AG04450 (cell line): ENCODE measurements at regions of chr2 and their contacts with region 1.

Region 1: DNA sequence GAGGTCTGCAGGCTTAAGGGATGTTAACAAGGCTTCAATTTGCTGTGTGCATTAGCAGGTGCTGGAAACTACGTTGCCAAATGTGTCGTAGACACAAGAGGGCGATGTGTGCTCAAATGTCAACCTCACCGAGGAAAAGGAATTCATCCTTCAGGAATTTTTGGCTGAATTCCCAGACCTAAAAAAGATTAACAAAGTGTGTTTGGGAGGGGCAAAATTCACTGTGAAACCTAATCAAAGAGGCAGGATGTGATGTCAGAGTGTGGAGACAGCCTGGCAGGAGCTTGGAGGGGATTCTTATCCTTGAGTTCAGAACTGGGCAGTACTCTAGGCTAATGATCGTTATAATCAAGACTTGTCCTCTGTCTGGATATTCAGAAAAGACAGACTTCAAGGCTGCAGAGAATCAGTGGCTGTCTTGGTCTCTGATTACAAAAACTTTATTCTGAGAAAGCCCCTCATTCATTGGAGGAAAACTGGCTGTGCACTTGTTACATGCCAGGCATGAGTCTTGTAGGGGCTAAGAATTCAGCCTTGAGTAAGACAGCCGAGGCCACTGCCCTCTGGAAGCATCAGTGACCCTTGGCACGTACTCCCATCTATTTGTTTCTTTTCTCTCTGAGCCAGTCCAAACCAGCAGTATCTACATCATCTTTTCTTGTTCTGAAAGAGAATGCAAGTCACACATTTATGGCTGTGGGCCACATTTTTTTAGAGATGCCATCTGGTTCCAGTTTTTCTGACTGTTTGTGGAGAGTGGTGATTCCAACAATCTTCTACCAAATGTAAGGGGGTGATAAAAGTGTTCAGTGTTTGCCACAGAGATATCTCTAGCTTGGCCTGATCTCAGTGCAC is 18.7 kb upstream of the SCYGR1 start:
- DNase-seq: peak; percentile 95
- H3K4me3 ChIP-seq: no peak overlapping the region
- H3K27ac ChIP-seq: peak overlapping the region; percentile 96
- H3K27me3 ChIP-seq: no peaks in the 10 kb centered on the region
- CTCF ChIP-seq: peak; percentile 77

Region 2: GRCh38 chr2:227163998-227164762 is 242.2 kb before region 1 on chr2 and contains the starts of genes COL4A3 and COL4A4:
- CTCF ChIA-PET with region 1: no interaction called
- POLR2A ChIA-PET with region 1: no interaction called
- DNase-seq: no peak
- H3K4me3 ChIP-seq: peak within 1 kb of the TSS; percentile 25
- H3K27ac ChIP-seq: no peak within 1 kb of the TSS
- H3K27me3 ChIP-seq: peaks cover 28% of the 10 kb centered on the region
- CTCF ChIP-seq: no peak
- polyA plus RNA-seq, gene COL4A3: 0.07 TPM in 1 of 2 replicates, not detected in the other
- polyA plus RNA-seq, gene COL4A4: 0.05 and 0.06 TPM in 2 replicates

Region 3: GRCh38 chr2:227376911-227377396 is 29.4 kb before region 1 on chr2:
- CTCF ChIA-PET with region 1: interaction called, 16 read pairs
- POLR2A ChIA-PET with region 1: interaction called, 3 read pairs
- DNase-seq: peak; percentile 23
- H3K4me3 ChIP-seq: no peak overlapping the region
- H3K27ac ChIP-seq: no peak overlapping the region
- H3K27me3 ChIP-seq: no peaks in the 10 kb centered on the region
- CTCF ChIP-seq: no peak

Region 4: DNA sequence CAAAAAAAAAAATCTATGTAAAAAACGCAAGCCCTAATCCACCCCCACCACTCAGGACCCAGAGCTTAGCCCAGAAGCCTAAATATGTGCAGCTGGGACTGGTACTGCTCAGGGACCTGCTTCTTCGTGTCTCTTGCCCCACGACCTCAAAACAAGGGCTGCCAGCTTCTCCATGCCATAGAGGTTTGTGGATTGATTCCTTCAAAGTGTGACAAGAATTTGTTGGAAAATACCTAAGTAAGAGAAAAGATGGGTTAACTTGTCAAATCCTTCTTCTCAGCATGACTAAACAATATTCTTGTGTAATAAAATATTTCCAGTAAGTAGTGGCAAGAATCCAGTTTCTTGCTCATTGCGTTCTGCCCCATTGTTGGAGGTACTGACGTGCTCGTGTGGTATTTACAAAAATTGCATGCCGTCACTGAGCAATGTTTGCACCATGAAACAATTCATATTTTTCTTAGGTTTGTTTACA is 17.8 kb before region 1 on chr2:
- CTCF ChIA-PET with region 1: interaction called, 26 read pairs
- POLR2A ChIA-PET with region 1: interaction called, 4 read pairs
- DNase-seq: peak; percentile 98
- H3K4me3 ChIP-seq: no peak overlapping the region
- H3K27ac ChIP-seq: peak overlapping the region; percentile 96
- H3K27me3 ChIP-seq: no peaks in the 10 kb centered on the region
- CTCF ChIP-seq: no peak

Region 5: GRCh38 chr2:227395556-227395955 is 10.8 kb before region 1 on chr2:
- CTCF ChIA-PET with region 1: interaction called, 26 read pairs
- POLR2A ChIA-PET with region 1: interaction called, 4 read pairs
- DNase-seq: no peak
- H3K4me3 ChIP-seq: no peak overlapping the region
- H3K27ac ChIP-seq: no peak overlapping the region
- H3K27me3 ChIP-seq: no peaks in the 10 kb centered on the region
- CTCF ChIP-seq: no peak

Region 6: GRCh38 chr2:227471924-227472264 is 65.5 kb after region 1 on chr2 and contains the start of gene AGFG1:
- CTCF ChIA-PET with region 1: interaction called, 19 read pairs
- POLR2A ChIA-PET with region 1: no interaction called
- DNase-seq: peak; percentile 42
- H3K4me3 ChIP-seq: peak within 1 kb of the TSS; percentile 84
- H3K27ac ChIP-seq: peak within 1 kb of the TSS; percentile 47
- H3K27me3 ChIP-seq: no peaks in the 10 kb centered on the region
- CTCF ChIP-seq: peak; percentile 99
- polyA plus RNA-seq, gene AGFG1: 124 and 139 TPM in 2 replicates

Region 7: GRCh38 chr2:227766373-227766883 is 360.0 kb after region 1 on chr2:
- CTCF ChIA-PET with region 1: interaction called, 63 read pairs
- POLR2A ChIA-PET with region 1: interaction called, 3 read pairs
- DNase-seq: peak; percentile 50
- H3K4me3 ChIP-seq: no peak overlapping the region
- H3K27ac ChIP-seq: peak overlapping the region; percentile 21
- H3K27me3 ChIP-seq: no peaks in the 10 kb centered on the region
- CTCF ChIP-seq: peak; percentile 83

Region 8: DNA sequence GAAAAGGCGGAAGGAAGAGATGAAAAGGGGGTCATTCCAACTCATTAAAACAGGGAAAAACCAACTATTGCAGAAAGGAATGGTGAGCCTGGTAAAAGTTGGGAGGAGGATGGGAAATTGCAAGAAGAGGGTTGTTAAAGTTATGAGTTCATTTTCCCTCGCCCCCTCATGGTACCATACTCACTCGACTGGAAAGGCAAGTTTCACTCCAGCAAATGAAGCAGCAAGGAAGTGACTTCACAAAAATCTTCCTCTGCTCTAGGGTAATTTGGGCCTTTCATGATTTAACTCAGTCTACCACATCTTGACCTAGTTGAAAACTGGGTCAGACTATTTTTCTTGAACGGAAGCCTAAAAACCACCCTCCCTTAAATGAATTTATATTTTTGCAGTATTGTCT is 442.2 kb after region 1 on chr2:
- CTCF ChIA-PET with region 1: no interaction called
- POLR2A ChIA-PET with region 1: no interaction called
- DNase-seq: no peak
- H3K4me3 ChIP-seq: no peak overlapping the region
- H3K27ac ChIP-seq: no peak overlapping the region
- H3K27me3 ChIP-seq: no peaks in the 10 kb centered on the region
- CTCF ChIP-seq: no peak